ENCODE measurements at regions of chr5 and their contacts with region 1.

Region 1: GRCh38 chr5:178732281-178732680 is 1.8 kb upstream of the ZNF354A start:
- DNase-seq: no peak
- H3K4me3 ChIP-seq: no peak overlapping the region
- H3K4me3 Mint-ChIP-seq: peak overlapping the region in 2 of 8 donors; percentile 25 to 55
- H3K27ac ChIP-seq: no peak overlapping the region
- H3K27ac Mint-ChIP-seq: peak overlapping the region in 2 of 7 donors; percentile 28 to 73
- H3K4me1 ChIP-seq: peaks cover 5% of the 10 kb centered on the region
- H3K4me1 Mint-ChIP-seq: peaks cover 6 to 15% (median 7%) of the 10 kb centered on the region in 4 donors
- H3K27me3 ChIP-seq: no peaks in the 10 kb centered on the region
- H3K27me3 Mint-ChIP-seq: no peaks in the 10 kb centered on the region

Region 2: DNA sequence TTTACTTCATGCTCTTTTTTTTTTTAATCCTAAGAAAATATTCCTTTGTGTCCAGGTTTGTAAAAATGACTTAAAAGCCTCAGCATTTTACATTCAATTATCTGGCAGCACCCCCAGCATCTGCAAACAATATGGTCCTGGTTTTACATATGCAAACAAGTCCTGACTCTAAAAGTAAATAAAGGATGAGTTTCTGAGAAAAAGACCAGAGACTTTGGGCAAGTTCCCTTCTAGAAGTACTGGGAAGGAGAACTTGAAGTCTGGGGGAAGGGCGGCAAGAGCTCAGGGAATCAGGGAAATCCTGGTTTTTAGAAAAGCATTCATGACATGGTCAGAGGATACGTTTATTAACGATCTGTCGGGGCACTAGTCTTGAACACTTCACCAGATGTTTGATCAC is 167.9 kb before region 1 on chr5:
- CTCF ChIA-PET with region 1: no interaction called
- POLR2A ChIA-PET with region 1: no interaction called
- intact Hi-C with region 1: no loop called
- DNase-seq: no peak
- H3K4me3 ChIP-seq: no peak overlapping the region
- H3K4me3 Mint-ChIP-seq: no peak overlapping the region
- H3K27ac ChIP-seq: no peak overlapping the region
- H3K27ac Mint-ChIP-seq: no peak overlapping the region
- H3K4me1 ChIP-seq: no peaks in the 10 kb centered on the region
- H3K4me1 Mint-ChIP-seq: peaks cover 0 to 3% (median under 1%) of the 10 kb centered on the region in 4 donors
- H3K27me3 ChIP-seq: peaks cover 4% of the 10 kb centered on the region
- H3K27me3 Mint-ChIP-seq: peaks cover 20 to 21% of the 10 kb centered on the region in 2 donors

Region 3: DNA sequence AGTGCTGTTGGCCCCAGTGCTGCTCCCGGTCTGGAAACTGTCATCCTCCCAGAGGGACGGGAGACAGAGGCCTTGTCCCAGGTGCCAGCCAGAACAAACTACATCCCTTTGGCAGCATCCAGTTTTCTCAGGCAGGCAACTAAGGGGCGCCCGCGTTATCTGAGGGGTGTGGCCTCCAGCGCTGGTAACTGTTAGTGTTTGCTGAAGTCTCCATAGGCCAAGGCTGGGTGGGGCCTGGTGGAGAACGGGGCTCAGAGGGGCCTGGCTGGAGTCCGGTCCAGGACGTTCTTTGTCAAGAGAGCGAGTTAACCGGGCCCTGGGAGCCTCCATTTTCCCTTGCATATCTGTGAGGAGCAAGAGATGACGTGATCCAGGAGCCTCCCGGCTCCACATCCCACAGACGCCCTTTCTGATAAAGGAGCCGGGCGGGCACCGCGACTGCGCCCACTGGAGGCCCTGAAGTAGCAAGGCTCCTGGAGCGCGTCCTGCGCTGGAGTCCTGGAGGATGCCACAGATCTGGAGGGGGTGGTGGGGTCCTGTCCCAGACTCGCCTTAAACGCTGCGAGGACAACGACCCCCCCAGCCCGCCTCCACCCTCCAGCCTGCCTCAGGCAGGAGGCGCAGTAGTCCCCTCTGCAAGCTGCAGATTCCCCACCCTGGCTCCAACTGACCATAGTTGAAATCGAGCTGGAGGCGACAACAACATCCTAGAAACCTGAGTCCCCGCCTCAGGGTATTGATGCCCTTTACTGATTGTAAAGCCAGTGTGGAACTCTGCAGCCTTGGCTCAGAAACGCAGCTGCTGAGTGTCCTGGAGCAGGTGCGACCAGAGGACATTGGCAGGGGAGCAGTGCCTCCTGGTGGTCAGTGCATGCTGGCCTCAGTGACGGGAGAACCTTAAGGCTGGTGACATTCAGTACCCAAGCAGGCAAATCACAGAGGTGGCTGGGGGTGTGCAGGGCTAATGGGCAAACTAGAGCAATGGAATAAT is 106.7 kb after region 1 on chr5:
- CTCF ChIA-PET with region 1: no interaction called
- POLR2A ChIA-PET with region 1: no interaction called
- intact Hi-C with region 1: loop called (anchors 1 kb)
- DNase-seq: peak in 4 of 5 donors; percentile 8 to 46 (median 26)
- H3K4me3 ChIP-seq: no peak overlapping the region
- H3K4me3 Mint-ChIP-seq: no peak overlapping the region
- H3K27ac ChIP-seq: no peak overlapping the region
- H3K27ac Mint-ChIP-seq: no peak overlapping the region
- H3K4me1 ChIP-seq: no peaks in the 10 kb centered on the region
- H3K4me1 Mint-ChIP-seq: no peaks in the 10 kb centered on the region
- H3K27me3 ChIP-seq: no peaks in the 10 kb centered on the region
- H3K27me3 Mint-ChIP-seq: peaks cover 0 to 1% of the 10 kb centered on the region in 2 donors

Region 4: GRCh38 chr5:178859625-178860531 is 127.6 kb after region 1 on chr5 and contains the start of gene ZNF354B:
- CTCF ChIA-PET with region 1: interaction called, 29 read pairs
- POLR2A ChIA-PET with region 1: interaction called, 23 read pairs
- intact Hi-C with region 1: loop called (anchors 1 kb)
- DNase-seq: peak; percentile 82 to 90 (median 85)
- H3K4me3 ChIP-seq: peak within 1 kb of the TSS; percentile 48 to 66
- H3K4me3 Mint-ChIP-seq: peak within 1 kb of the TSS; percentile 89 to 97 (median 94)
- H3K27ac ChIP-seq: peak within 1 kb of the TSS; percentile 40
- H3K27ac Mint-ChIP-seq: peak within 1 kb of the TSS; percentile 85 to 95 (median 92)
- H3K4me1 ChIP-seq: peaks cover 22% of the 10 kb centered on the region
- H3K4me1 Mint-ChIP-seq: peaks cover 18 to 33% (median 25%) of the 10 kb centered on the region in 4 donors
- H3K27me3 ChIP-seq: no peaks in the 10 kb centered on the region
- H3K27me3 Mint-ChIP-seq: no peaks in the 10 kb centered on the region
- total RNA-seq, gene ZNF354B: 31.3 to 32.4 TPM

Region 5: GRCh38 chr5:179023528-179024430 is 291.5 kb after region 1 on chr5 and contains the start of gene ZNF879:
- CTCF ChIA-PET with region 1: interaction called, 6 read pairs
- POLR2A ChIA-PET with region 1: interaction called, 11 read pairs
- intact Hi-C with region 1: loop called (anchors 1 kb)
- DNase-seq: peak; percentile 93 to 95 (median 94)
- H3K4me3 ChIP-seq: peak within 1 kb of the TSS; percentile 54 to 61
- H3K4me3 Mint-ChIP-seq: peak within 1 kb of the TSS; percentile 92 to 99 (median 96)
- H3K27ac ChIP-seq: peak within 1 kb of the TSS; percentile 66
- H3K27ac Mint-ChIP-seq: peak within 1 kb of the TSS; percentile 82 to 95 (median 93)
- H3K4me1 ChIP-seq: peaks cover 13% of the 10 kb centered on the region
- H3K4me1 Mint-ChIP-seq: peaks cover 8 to 20% (median 11%) of the 10 kb centered on the region in 4 donors
- H3K27me3 ChIP-seq: no peaks in the 10 kb centered on the region
- H3K27me3 Mint-ChIP-seq: peaks cover 2 to 3% of the 10 kb centered on the region in 2 donors
- total RNA-seq, gene ZNF879: 15.9 to 16.3 TPM

Region 6: DNA sequence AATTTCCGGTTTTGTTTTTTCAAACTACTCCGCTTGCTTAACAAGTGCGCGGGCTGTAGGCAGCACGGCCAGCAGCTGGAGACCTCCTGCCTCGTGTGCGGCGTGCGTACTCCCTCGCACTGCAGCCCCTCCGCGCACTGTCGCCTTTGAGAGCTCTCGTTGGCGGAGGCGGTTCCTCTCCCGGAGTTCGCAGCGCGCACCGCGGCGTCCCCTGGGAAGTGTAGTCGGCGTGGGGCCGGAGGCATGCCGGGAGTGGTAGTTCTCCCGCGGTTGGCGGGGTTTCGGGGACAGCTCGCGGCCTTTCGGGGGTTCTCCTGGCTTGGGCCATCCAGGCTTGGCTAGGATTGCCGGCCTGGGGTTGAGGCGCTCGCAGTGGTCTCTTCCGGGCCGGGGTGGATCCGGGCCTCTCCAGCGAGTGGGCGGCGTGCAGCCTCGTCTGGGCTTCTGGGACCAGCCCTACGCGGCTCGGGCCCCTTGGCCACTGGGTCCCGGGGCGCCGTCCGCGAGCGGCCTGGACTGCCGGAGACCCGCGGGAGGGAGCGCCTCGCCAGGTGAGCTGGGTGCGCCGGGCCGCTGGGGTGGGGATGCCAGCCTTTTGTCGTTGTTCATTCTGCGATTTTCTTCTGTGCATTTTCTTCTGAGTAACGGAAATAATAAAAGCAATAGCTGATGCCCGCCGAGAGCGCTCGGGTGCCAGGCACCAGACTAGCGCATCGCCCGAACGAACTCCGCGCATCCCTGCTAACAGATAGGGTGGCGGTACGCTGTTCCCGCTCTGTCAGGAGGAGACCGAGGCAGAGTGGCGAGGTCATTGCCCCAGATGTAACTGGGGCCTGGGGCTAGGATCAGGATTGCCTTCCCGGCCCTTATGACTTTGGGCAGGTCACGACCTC is 328.1 kb after region 1 on chr5 and contains the start of gene ZNF354C:
- CTCF ChIA-PET with region 1: interaction called, 24 read pairs
- POLR2A ChIA-PET with region 1: interaction called, 28 read pairs
- intact Hi-C with region 1: no loop called
- DNase-seq: peak; percentile 82 to 86 (median 84)
- H3K4me3 ChIP-seq: peak within 1 kb of the TSS; percentile 54 to 61
- H3K4me3 Mint-ChIP-seq: peak within 1 kb of the TSS; percentile 90 to 99 (median 94)
- H3K27ac ChIP-seq: peak within 1 kb of the TSS; percentile 70
- H3K27ac Mint-ChIP-seq: peak within 1 kb of the TSS; percentile 82 to 96 (median 94)
- H3K4me1 ChIP-seq: peaks cover 14% of the 10 kb centered on the region
- H3K4me1 Mint-ChIP-seq: peaks cover 14 to 36% (median 27%) of the 10 kb centered on the region in 4 donors
- H3K27me3 ChIP-seq: no peaks in the 10 kb centered on the region
- H3K27me3 Mint-ChIP-seq: peaks cover 0 to 1% of the 10 kb centered on the region in 2 donors
- total RNA-seq, gene ZNF354C: 11.2 to 11.3 TPM